Aorta (tissue), 5 donors: ENCODE measurements at regions of chr10 and their contacts with region 1.

Region 1: GRCh38 chr10:132354356-132355094 is 22.5 kb downstream of the LRRC27 start:
- DNase-seq: peak; percentile 43 to 64
- ATAC-seq: no peak
- H3K4me3 ChIP-seq: no peak overlapping the region
- H3K27ac ChIP-seq: no peak overlapping the region
- H3K4me1 ChIP-seq: no peaks in the 10 kb centered on the region
- H3K27me3 ChIP-seq: no peaks in the 10 kb centered on the region

Region 2: DNA sequence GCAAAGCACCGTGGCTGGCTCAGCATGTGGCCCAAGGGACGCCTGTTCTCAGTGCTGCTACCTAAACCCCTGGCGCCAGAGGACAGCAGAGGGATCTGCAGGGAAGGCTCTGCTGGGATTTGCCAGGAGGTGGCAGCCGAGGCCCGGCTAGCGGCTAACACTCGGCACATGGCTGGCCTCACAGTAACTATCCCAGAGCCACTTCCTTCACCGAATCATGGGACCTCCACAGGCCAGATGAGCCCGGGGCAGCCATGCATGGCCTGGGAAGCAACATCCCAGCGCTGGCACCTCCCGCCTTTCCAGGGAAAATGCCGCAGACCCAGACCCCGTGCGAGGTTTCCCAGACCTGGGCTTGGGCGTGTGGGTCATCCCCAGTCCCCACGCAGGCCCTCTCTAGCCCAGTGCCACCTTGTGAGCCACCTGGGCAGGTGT is 131.4 kb before region 1 on chr10:
- intact Hi-C with region 1: loop called (anchors 1 to 5 kb)
- DNase-seq: peak; percentile 89 to 91
- ATAC-seq: peak; percentile 80
- H3K4me3 ChIP-seq: no peak overlapping the region
- H3K27ac ChIP-seq: no peak overlapping the region
- H3K4me1 ChIP-seq: no peaks in the 10 kb centered on the region
- H3K27me3 ChIP-seq: no peaks in the 10 kb centered on the region

Region 3: DNA sequence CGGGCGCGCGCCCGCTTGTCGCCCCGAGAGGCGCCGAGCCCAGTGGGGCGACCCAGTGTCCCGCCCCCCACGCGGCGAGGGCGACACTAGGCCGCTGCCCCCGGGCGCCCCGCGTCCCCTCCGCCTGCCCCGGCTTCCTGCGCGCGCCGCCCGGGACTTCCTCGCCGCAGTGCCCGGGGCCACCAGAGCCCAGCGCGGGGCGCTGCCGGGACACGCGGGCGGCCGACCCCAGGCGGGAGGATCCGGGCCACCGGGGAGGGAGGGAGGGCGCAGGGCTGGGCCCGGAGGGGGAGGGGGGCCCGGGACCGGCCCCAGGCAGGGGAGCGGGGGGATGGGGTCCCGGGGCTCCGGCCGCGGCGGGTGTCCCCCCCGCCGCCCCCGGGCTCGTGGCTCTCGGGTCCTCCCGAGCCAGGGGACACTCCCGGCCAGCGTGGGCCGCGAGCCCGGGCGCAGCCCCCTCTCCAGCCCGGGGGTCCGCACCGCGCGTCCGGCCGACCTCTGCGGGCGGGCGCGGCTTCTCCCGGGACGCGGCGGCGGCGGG is 42.0 kb after region 1 on chr10:
- intact Hi-C with region 1: no loop called
- DNase-seq: peak; percentile 75 to 90
- ATAC-seq: peak; percentile 34
- H3K4me3 ChIP-seq: peak overlapping the region; percentile 59 to 76
- H3K27ac ChIP-seq: peak overlapping the region in 1 of 2 donors; percentile 28
- H3K4me1 ChIP-seq: no peaks in the 10 kb centered on the region
- H3K27me3 ChIP-seq: no peaks in the 10 kb centered on the region